Heart right ventricle (tissue), 16 donors: ENCODE measurements at regions of chr15 and their contacts with region 1.

Region 1: DNA sequence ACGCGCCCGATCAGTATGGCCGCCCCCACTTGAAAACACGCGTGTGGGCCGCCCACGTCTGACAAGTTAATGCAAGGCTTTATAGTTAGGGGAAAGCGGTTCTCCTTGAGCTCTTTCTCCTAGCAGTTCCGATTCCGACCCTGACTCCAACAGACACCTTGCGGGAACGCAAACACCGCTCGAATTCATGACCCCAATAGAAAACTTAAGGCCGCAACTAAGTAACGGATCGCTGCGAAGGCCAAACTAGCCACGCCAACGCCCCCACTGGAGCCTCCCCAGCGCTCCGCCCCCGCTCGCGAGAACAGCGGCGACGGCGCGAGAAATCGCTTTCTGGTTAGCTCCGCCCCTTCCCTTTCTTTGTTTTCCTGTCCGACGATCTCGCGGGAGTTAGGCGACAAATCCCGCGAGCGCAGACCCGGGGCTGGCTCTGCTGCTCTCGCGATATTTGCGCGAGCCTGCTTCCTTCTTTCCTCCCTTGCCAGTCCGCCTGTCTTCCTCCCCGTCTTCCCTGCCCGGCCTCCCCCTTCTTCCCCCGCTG is at the start of gene IREB2:
- DNase-seq: peak; percentile 97 to 98
- ATAC-seq: peak; percentile 96 to 99 (median 97)
- H3K4me3 ChIP-seq: peak within 1 kb of the TSS; percentile 67 to 100 (median 94)
- H3K27ac ChIP-seq: peak within 1 kb of the TSS; percentile 78 to 99 (median 97)
- H3K4me1 ChIP-seq: peaks cover 7 to 49% (median 43%) of the 10 kb centered on the region in 9 donors
- H3K27me3 ChIP-seq: no peaks in the 10 kb centered on the region
- CTCF ChIP-seq: no peak
- total RNA-seq, gene IREB2: 27.1 to 39.8 (median 31.5) TPM

Region 2: DNA sequence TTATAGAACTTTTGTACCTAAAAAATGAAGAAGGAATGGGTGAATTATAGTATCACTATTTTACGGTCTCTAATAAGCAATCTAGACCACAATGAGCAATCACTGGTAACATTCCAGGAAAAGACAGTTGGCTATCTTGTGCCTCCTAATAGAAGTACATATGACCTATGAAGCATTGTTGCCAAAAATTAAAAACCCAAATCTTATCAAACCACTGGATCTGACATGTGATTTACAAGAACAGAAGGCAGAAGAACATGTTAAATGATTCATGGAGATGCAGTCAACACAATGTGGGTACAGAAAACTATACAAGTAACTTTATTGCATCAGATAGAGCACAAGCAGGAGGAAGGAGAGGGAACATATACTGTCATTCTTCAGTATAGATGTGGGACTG is 55.0 kb after region 1 on chr15:
- intact Hi-C with region 1: no loop called
- DNase-seq: no peak
- ATAC-seq: no peak
- H3K4me3 ChIP-seq: no peak overlapping the region
- H3K27ac ChIP-seq: no peak overlapping the region
- H3K4me1 ChIP-seq: peaks cover 0 to 4% (median 0%) of the 10 kb centered on the region in 9 donors
- H3K27me3 ChIP-seq: no peaks in the 10 kb centered on the region
- CTCF ChIP-seq: no peak

Region 3: DNA sequence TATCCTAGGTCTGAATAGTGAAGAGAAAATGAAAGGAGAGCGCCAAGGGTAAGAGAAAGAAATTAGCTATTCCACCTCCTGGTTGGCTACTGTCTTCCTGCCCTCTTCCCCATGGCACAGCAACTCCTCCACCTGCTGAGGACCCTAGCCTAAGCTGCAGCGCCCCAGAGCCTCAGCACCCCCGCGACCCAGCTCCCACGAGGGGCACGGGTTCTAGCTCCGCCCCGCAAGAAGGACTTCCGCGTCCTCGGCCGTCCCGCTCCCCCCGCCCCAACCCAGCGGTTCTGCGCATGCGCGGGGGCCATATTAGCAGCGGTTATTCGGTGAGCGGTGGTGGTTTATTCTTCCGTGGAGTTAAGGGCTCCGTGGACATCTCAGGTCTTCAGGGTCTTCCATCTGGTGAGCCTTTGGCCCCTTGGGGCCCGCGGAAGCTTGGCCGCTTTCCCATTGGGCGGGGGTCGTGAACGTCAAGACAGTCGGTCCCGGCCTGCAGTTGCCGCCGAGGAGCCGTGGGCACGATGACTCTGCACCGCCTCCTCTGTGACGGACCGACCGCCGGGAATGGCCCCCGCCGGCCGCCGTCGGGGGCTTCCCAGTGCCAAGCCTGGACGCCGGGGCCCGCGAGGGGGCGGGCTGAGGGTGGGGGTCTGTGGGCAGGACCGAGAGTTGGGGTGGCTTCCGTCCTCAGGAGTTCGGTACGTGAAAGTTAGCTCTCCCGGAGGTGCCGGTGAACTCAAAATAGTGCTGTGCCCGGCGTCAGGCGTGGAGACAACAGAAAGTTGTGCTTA is 102.5 kb after region 1 on chr15 and contains the start of gene PSMA4:
- intact Hi-C with region 1: loop called in 1 of 10 experiments (anchors 5 kb)
- DNase-seq: peak; percentile 93 to 94
- ATAC-seq: peak; percentile 95 to 98 (median 96)
- H3K4me3 ChIP-seq: peak within 1 kb of the TSS; percentile 65 to 94 (median 81)
- H3K27ac ChIP-seq: peak within 1 kb of the TSS; percentile 90 to 97 (median 96)
- H3K4me1 ChIP-seq: peaks cover 5 to 44% (median 23%) of the 10 kb centered on the region in 9 donors
- H3K27me3 ChIP-seq: no peaks in the 10 kb centered on the region
- CTCF ChIP-seq: peak in 8 of 9 donors; percentile 18 to 68 (median 40)
- total RNA-seq, gene PSMA4: 89.4 to 133 (median 113) TPM

Region 4: DNA sequence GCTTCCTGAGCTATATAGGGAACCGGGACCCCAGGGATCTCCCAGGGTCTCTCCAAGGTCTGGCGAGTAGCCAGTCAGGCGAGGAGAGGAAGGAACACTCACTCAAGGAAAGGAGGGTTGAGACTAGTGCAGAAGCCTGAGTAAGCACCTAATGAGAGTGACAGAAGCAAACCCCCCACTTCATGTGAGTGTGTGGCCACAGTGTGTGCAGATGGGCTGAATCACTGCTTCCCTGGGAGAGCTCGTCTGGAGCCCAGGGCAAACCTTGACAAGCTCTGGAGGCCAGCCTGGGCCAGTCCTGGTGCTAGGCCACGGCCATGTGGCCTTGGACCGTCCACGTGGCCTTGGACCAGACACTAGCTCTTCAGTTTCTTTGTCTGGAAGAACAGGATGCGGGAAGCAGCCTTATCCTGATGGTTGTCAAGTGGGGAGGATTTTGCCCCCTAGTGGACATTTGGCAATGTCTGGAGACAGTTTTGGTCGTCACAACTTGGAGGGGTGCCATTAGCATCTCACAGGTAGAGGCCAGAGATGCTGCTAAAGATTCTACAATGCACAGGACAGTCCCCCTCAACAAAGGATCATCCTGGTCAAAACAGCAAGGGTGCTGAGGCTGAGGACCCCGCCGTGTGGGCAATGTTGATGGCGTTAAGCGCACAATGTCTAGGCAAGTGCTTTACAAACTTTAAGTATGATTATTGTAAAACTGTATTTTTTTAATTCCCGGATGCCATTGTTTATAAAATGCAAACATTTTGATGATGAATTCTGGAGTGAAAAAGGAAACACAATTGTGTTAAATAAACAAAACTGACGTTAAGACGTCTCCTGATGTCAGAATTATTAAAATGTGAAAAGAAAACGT is 541.9 kb after region 1 on chr15:
- intact Hi-C with region 1: loop called in 1 of 10 experiments (anchors 10 kb)
- DNase-seq: peak in 1 of 2 donors; percentile 71
- ATAC-seq: peak; percentile 56 to 75 (median 68)
- H3K4me3 ChIP-seq: no peak overlapping the region
- H3K27ac ChIP-seq: peak overlapping the region in 2 of 10 donors; percentile 2 to 5
- H3K4me1 ChIP-seq: peaks cover 0 to 43% (median 8%) of the 10 kb centered on the region in 9 donors
- H3K27me3 ChIP-seq: no peaks in the 10 kb centered on the region
- CTCF ChIP-seq: peak; percentile 63 to 79 (median 70)